Lower leg skin (tissue), 4 donors: ENCODE measurements at regions of chr4 and their contacts with region 1.

Region 1: DNA sequence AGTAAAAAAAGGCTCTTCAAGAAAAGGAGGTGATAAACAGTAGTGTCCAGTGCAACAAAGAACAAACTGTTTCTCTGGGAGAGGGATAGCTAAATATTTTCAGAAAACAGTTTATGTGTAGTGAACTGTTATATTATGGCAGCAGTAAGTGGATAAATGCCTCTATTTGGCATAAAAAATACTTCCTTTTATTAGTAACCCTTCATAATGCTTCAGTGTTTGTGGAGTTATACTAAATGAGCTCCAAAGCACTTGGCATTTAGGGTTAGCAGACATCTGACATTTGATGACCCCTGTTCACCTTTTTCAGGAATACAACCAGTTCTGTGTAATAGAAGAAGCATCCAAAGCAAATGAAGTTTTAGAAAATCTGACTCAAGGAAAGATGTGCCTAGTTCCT is 31.9 kb downstream of the TRAPPC11 start:
- DNase-seq: no peak
- H3K4me3 ChIP-seq: no peak overlapping the region
- CTCF ChIP-seq: no peak
- POLR2A ChIP-seq: no peak

Region 2: GRCh38 chr4:183645326-183645725 is 45.7 kb before region 1 on chr4:
- intact Hi-C with region 1: loop called (anchors 2 kb)
- DNase-seq: no peak
- H3K4me3 ChIP-seq: no peak overlapping the region
- CTCF ChIP-seq: no peak
- POLR2A ChIP-seq: no peak

Region 3: GRCh38 chr4:185682236-185682635 is 1991.2 kb after region 1 on chr4:
- intact Hi-C with region 1: no loop called
- DNase-seq: no peak
- H3K4me3 ChIP-seq: no peak overlapping the region
- CTCF ChIP-seq: no peak
- POLR2A ChIP-seq: no peak